Natural killer cell (primary cell): ENCODE measurements at regions of chr1 and their contacts with region 1.

Region 1: GRCh38 chr1:70205434-70206118 is at the start of gene LRRC40:
- DNase-seq: peak; percentile 97 to 98
- ATAC-seq: peak; percentile 96 to 100 (median 97)
- H3K4me3 ChIP-seq: peak within 1 kb of the TSS; percentile 58
- H3K4me3 Mint-ChIP-seq: peak within 1 kb of the TSS; percentile 97
- H3K27ac ChIP-seq: peak within 1 kb of the TSS; percentile 88
- H3K27ac Mint-ChIP-seq: peak within 1 kb of the TSS; percentile 98 to 99
- H3K4me1 ChIP-seq: peaks cover 21% of the 10 kb centered on the region
- H3K4me1 Mint-ChIP-seq: peaks cover 41 to 61% of the 10 kb centered on the region in 2 donors
- H3K27me3 ChIP-seq: no peaks in the 10 kb centered on the region
- H3K27me3 Mint-ChIP-seq: no peaks in the 10 kb centered on the region
- CTCF ChIP-seq: no peak
- total RNA-seq, gene LRRC40: 15.5 to 18.4 (median 16.5) TPM

Region 2: DNA sequence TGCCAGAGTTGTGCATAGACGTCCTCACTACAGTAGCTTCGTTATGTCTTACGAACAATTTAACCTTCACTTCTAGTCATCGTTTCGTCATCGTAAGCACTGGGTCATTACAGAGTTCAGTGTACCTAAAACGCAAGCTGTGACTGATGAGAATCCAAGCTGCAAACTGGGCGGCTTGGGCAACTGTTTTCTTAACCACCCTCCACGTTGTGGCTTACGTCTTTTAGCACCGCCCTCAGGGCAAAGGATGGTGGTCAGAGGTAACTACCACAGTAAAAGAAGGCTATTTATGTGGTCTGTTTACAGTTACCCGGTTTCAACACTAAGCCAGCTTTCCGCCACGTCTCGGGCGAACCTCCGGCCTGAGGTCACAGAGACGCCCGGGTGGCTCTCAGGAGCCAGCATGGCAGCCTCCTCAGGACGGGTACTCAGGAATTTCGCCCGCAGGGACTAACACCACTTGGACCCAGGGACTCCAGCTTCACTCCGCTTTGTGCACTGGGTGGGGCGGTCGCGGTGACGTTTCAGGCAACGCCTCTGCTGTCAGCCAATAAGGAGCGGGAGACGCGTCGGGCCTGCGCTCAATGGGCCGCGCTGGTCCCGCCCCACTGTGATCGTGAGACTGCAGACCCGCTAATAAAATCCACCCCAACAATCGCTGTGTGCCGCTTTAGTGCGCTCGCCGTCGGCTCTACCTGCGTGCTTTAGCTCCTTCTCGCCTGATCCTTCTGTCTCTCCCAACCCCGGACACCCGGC is 205.2 kb after region 1 on chr1 and contains the start of gene CTH:
- intact Hi-C with region 1: loop called (anchors 1 kb)
- DNase-seq: peak; percentile 92 to 96
- ATAC-seq: peak; percentile 93 to 97 (median 93)
- H3K4me3 ChIP-seq: peak within 1 kb of the TSS; percentile 69
- H3K4me3 Mint-ChIP-seq: peak within 1 kb of the TSS; percentile 99
- H3K27ac ChIP-seq: peak within 1 kb of the TSS; percentile 91
- H3K27ac Mint-ChIP-seq: peak within 1 kb of the TSS; percentile 90 to 93
- H3K4me1 ChIP-seq: peaks cover 8% of the 10 kb centered on the region
- H3K4me1 Mint-ChIP-seq: peaks cover 15 to 18% of the 10 kb centered on the region in 2 donors
- H3K27me3 ChIP-seq: peaks cover 4% of the 10 kb centered on the region
- H3K27me3 Mint-ChIP-seq: peaks cover 13 to 19% of the 10 kb centered on the region in 2 donors
- CTCF ChIP-seq: no peak
- total RNA-seq, gene CTH: 3.0 to 7.6 (median 3.6) TPM

Region 3: DNA sequence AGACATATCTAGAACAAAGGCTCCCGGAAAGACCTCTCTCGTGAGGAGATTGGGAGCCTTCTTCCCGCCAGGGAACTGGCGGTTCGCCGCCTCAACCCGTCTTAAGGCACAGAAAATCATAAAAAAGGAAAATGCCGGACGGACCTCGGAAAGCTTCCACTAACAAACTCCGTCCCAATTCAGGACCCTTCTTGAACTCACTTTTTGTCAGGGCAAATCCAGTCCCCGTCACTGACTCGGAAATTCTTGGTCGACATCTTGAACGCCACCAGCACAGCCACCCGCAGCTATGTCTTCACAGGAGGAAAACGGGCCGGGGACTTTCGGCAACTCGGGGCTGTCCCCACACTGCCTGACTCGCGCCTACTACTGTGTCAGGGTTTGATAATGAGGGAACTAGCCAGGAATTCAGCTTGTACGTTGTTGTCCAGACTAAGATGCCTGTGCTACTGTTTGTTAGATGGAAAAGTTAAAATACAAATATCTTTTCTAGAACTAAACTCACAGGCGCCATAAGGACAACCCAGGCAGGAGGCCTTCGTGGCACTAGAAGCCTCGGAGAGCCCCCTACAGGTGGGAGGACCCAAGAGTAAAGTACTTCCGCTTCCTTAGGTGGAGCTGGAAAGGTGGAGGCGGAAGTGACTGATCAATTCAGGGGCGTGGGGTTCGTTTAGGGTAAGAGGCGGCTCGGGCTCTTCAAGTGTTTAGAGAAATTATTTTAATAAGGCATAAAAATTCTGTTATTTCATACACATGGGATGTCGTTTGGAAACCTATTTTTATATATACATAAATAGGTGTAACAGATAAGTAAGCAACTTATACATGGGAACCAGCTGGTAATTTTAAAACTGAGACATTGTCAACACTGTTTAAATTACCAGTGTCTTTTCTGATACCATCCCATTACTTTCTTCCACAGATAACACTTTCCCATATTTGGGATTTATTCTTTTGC is 875.4 kb after region 1 on chr1 and contains the start of gene ZRANB2:
- intact Hi-C with region 1: loop called (anchors 1 kb)
- DNase-seq: peak; percentile 85 to 96
- ATAC-seq: peak; percentile 95 to 99 (median 95)
- H3K4me3 ChIP-seq: peak within 1 kb of the TSS; percentile 99
- H3K4me3 Mint-ChIP-seq: peak within 1 kb of the TSS; percentile 93
- H3K27ac ChIP-seq: peak within 1 kb of the TSS; percentile 90
- H3K27ac Mint-ChIP-seq: peak within 1 kb of the TSS; percentile 99
- H3K4me1 ChIP-seq: peaks cover 11% of the 10 kb centered on the region
- H3K4me1 Mint-ChIP-seq: peaks cover 27 to 30% of the 10 kb centered on the region in 2 donors
- H3K27me3 ChIP-seq: no peaks in the 10 kb centered on the region
- H3K27me3 Mint-ChIP-seq: peaks cover 23 to 35% of the 10 kb centered on the region in 2 donors
- CTCF ChIP-seq: peak; percentile 59
- total RNA-seq, gene ZRANB2: 114 to 133 (median 128) TPM